ENCODE measurements at regions of chr10 and their contacts with region 1.

Region 1: GRCh38 chr10:123139521-123140163 is 3.9 kb downstream of the HMX3 start:
- DNase-seq: no peak
- ATAC-seq: no peak
- H3K4me3 ChIP-seq: no peak overlapping the region
- H3K4me3 Mint-ChIP-seq: peak overlapping the region in 9 of 10 donors; percentile 7 to 72 (median 40)
- H3K27ac ChIP-seq: no peak overlapping the region
- H3K27ac Mint-ChIP-seq: peak overlapping the region in 2 of 9 donors; percentile 51 to 55
- H3K4me1 ChIP-seq: peaks cover 21 to 61% of the 10 kb centered on the region in 2 donors
- H3K4me1 Mint-ChIP-seq: peaks cover 15 to 72% (median 58%) of the 10 kb centered on the region in 7 donors
- H3K27me3 ChIP-seq: peaks cover 38 to 62% of the 10 kb centered on the region in 2 donors
- H3K27me3 Mint-ChIP-seq: peaks cover 74 to 85% (median 76%) of the 10 kb centered on the region in 5 donors

Region 2: DNA sequence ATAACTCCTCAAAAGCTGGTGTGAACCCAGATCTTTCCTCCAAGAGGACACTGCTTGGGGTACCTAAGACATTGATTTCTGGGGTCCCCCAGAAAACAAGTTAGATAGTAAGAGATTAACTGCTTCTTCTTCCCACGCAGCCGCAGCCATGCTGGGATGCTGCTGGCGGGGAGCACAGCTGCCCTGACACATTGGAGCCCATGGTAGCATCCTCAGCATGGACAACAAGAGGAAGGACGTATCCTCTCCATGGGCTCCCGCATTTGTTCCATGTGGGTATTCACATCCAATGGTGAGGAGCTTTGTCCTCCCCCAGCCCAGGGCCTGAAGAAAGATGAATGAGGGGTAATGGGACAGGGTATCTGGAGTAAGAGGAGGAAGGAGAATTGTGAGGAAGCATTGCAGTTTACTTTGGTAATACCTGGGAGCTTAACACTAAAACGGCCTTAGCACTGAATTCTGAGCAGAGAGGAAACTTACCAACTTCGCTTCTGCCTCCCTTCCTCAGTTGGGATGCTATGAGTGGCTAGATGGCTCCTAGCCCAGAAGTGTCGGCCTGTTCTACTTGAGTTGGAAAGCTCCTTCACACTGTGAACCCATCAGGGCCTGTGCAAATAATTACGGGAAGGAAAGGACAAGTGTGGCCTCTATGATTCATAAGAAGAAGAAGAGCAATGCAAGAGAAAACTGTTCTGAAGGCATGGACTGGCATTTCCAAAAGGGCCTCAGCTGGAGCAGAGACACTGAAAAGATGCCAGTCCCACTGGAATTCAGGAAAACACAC is 483.9 kb before region 1 on chr10:
- CTCF ChIA-PET with region 1: no interaction called
- POLR2A ChIA-PET with region 1: no interaction called
- intact Hi-C with region 1: no loop called
- DNase-seq: no peak
- ATAC-seq: no peak
- H3K4me3 ChIP-seq: no peak overlapping the region
- H3K4me3 Mint-ChIP-seq: no peak overlapping the region
- H3K27ac ChIP-seq: no peak overlapping the region
- H3K27ac Mint-ChIP-seq: no peak overlapping the region
- H3K4me1 ChIP-seq: no peaks in the 10 kb centered on the region
- H3K4me1 Mint-ChIP-seq: no peaks in the 10 kb centered on the region
- H3K27me3 ChIP-seq: no peaks in the 10 kb centered on the region
- H3K27me3 Mint-ChIP-seq: peaks cover 16 to 54% (median 24%) of the 10 kb centered on the region in 5 donors

Region 3: GRCh38 chr10:122949296-122949695 is 190.3 kb before region 1 on chr10:
- CTCF ChIA-PET with region 1: no interaction called
- POLR2A ChIA-PET with region 1: no interaction called
- intact Hi-C with region 1: no loop called
- DNase-seq: no peak
- ATAC-seq: no peak
- H3K4me3 ChIP-seq: no peak overlapping the region
- H3K4me3 Mint-ChIP-seq: no peak overlapping the region
- H3K27ac ChIP-seq: no peak overlapping the region
- H3K27ac Mint-ChIP-seq: peak overlapping the region in 1 of 9 donors; percentile 29
- H3K4me1 ChIP-seq: peaks cover 16% of the 10 kb centered on the region in 2 donors
- H3K4me1 Mint-ChIP-seq: peaks cover 21 to 52% (median 34%) of the 10 kb centered on the region in 7 donors
- H3K27me3 ChIP-seq: no peaks in the 10 kb centered on the region
- H3K27me3 Mint-ChIP-seq: peaks cover 0 to 2% (median 0%) of the 10 kb centered on the region in 5 donors

Region 4: GRCh38 chr10:123380497-123381085 is 240.9 kb after region 1 on chr10:
- CTCF ChIA-PET with region 1: no interaction called
- POLR2A ChIA-PET with region 1: no interaction called
- intact Hi-C with region 1: loop called in 1 of 2 experiments (anchors 2 kb)
- DNase-seq: peak in 3 of 9 donors; percentile 6 to 13 (median 10)
- ATAC-seq: no peak
- H3K4me3 ChIP-seq: no peak overlapping the region
- H3K4me3 Mint-ChIP-seq: no peak overlapping the region
- H3K27ac ChIP-seq: no peak overlapping the region
- H3K27ac Mint-ChIP-seq: no peak overlapping the region
- H3K4me1 ChIP-seq: no peaks in the 10 kb centered on the region
- H3K4me1 Mint-ChIP-seq: peaks cover 0 to 3% (median 0%) of the 10 kb centered on the region in 7 donors
- H3K27me3 ChIP-seq: no peaks in the 10 kb centered on the region
- H3K27me3 Mint-ChIP-seq: peaks cover 0 to 25% (median 5%) of the 10 kb centered on the region in 5 donors

Region 5: DNA sequence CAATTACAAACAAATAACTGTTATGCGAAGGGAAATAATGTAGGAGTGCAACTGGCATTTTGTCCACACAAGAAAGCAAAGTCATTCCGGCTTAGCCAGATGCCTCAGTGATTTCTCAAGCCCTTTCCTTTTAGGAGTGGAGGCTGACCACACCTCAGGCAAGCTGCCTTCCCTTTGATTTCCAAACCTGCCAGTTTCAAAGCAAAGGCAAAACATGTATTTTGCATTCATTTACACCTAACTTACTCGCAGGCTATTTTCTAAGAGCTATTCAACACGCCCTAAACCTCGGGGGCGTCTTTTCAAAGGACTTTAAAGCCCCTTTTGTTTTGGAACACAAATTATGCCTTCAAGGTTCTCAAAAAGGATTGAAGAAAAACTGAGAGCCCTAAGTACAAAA is 642.4 kb after region 1 on chr10:
- CTCF ChIA-PET with region 1: no interaction called
- POLR2A ChIA-PET with region 1: no interaction called
- intact Hi-C with region 1: no loop called
- DNase-seq: no peak
- ATAC-seq: no peak
- H3K4me3 ChIP-seq: no peak overlapping the region
- H3K4me3 Mint-ChIP-seq: no peak overlapping the region
- H3K27ac ChIP-seq: no peak overlapping the region
- H3K27ac Mint-ChIP-seq: no peak overlapping the region
- H3K4me1 ChIP-seq: no peaks in the 10 kb centered on the region
- H3K4me1 Mint-ChIP-seq: peaks cover 0 to 2% (median 0%) of the 10 kb centered on the region in 7 donors
- H3K27me3 ChIP-seq: no peaks in the 10 kb centered on the region
- H3K27me3 Mint-ChIP-seq: peaks cover 30 to 65% (median 49%) of the 10 kb centered on the region in 5 donors

Measured in naive thymus-derived CD4-positive, alpha-beta T cell (primary cell).